Activated naive CD4-positive, alpha-beta T cell treated with anti-CD3 and anti-CD28 coated beads for 36 hours (primary cell): ENCODE measurements at regions of chr19 and their contacts with region 1.

Region 1: GRCh38 chr19:34963573-34964409 is at the start of gene ZNF792:
- DNase-seq: peak; percentile 67
- H3K4me3 Mint-ChIP-seq: peak within 1 kb of the TSS; percentile 89
- H3K27ac Mint-ChIP-seq: peak within 1 kb of the TSS; percentile 60
- H3K4me1 Mint-ChIP-seq: peaks cover 21% of the 10 kb centered on the region
- H3K27me3 Mint-ChIP-seq: no peaks in the 10 kb centered on the region
- total RNA-seq, gene ZNF792: 3.1 to 3.5 TPM

Region 2: DNA sequence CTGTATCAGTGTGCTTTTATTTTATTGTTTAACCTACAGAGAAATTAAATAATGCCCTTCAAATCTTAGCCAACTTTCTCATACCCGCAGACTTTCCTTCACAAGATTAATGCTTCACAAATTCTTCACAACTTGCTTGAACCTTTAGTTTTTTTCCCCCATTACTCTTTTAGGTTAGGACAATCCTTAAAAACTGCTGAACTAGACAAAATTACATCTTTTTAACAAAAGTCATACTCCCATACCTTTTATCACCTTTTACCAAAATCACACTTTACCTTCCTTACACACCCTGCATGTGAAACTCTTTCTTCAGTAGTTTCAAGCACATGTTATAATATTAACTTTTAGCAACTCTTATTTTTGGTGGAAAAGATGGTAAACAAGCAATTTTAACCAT is 345.4 kb before region 1 on chr19:
- CTCF ChIA-PET with region 1: no interaction called
- intact Hi-C with region 1: no loop called
- DNase-seq: no peak
- H3K4me3 Mint-ChIP-seq: no peak overlapping the region
- H3K27ac Mint-ChIP-seq: no peak overlapping the region
- H3K4me1 Mint-ChIP-seq: no peaks in the 10 kb centered on the region
- H3K27me3 Mint-ChIP-seq: no peaks in the 10 kb centered on the region

Region 3: DNA sequence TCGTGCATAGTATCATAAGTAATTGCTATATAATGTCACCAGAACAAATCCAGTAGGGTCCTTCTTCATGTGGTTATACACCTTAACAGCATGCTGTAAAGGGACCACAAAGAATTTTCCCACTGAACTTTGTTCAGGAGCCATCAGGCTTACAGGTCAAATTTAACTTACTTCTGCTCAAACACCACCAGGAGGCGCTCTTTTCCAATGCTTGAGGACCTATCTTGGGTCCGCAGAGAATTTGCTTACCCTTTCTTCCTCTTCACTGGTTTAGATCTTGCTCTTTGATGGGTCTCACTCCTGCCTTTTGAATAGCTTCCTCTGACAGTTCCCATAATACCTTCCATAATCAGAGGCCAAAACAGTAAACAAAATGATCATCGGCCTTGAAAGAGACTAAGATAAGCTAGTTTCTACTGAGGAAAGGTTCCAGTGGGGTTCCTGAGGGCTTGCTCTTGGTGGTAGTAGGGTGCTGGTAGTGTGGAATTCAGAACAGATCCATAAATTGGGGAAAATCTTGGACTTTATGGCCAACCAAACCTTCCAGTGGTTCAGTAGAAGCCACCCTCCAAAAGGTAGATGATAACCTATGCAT is 324.2 kb before region 1 on chr19:
- CTCF ChIA-PET with region 1: no interaction called
- intact Hi-C with region 1: no loop called
- DNase-seq: peak; percentile 78
- H3K4me3 Mint-ChIP-seq: no peak overlapping the region
- H3K27ac Mint-ChIP-seq: no peak overlapping the region
- H3K4me1 Mint-ChIP-seq: no peaks in the 10 kb centered on the region
- H3K27me3 Mint-ChIP-seq: no peaks in the 10 kb centered on the region

Region 4: GRCh38 chr19:34926685-34927375 is 37.0 kb before region 1 on chr19 and contains the start of gene ZNF30:
- CTCF ChIA-PET with region 1: no interaction called
- intact Hi-C with region 1: loop called (anchors 1 kb)
- DNase-seq: peak; percentile 93
- H3K4me3 Mint-ChIP-seq: peak within 1 kb of the TSS; percentile 89
- H3K27ac Mint-ChIP-seq: peak within 1 kb of the TSS; percentile 44
- H3K4me1 Mint-ChIP-seq: peaks cover 13% of the 10 kb centered on the region
- H3K27me3 Mint-ChIP-seq: no peaks in the 10 kb centered on the region
- total RNA-seq, gene ZNF30: 4.4 to 5.5 TPM

Region 5: GRCh38 chr19:35030257-35031071 is 66.7 kb after region 1 on chr19 and contains the start of gene SCN1B:
- CTCF ChIA-PET with region 1: no interaction called
- intact Hi-C with region 1: no loop called
- DNase-seq: peak; percentile 78
- H3K4me3 Mint-ChIP-seq: peak within 1 kb of the TSS; percentile 65
- H3K27ac Mint-ChIP-seq: no peak within 1 kb of the TSS
- H3K4me1 Mint-ChIP-seq: peaks cover 12% of the 10 kb centered on the region
- H3K27me3 Mint-ChIP-seq: peaks cover 19% of the 10 kb centered on the region
- total RNA-seq, gene SCN1B: 0.83 to 0.89 TPM

Region 6: DNA sequence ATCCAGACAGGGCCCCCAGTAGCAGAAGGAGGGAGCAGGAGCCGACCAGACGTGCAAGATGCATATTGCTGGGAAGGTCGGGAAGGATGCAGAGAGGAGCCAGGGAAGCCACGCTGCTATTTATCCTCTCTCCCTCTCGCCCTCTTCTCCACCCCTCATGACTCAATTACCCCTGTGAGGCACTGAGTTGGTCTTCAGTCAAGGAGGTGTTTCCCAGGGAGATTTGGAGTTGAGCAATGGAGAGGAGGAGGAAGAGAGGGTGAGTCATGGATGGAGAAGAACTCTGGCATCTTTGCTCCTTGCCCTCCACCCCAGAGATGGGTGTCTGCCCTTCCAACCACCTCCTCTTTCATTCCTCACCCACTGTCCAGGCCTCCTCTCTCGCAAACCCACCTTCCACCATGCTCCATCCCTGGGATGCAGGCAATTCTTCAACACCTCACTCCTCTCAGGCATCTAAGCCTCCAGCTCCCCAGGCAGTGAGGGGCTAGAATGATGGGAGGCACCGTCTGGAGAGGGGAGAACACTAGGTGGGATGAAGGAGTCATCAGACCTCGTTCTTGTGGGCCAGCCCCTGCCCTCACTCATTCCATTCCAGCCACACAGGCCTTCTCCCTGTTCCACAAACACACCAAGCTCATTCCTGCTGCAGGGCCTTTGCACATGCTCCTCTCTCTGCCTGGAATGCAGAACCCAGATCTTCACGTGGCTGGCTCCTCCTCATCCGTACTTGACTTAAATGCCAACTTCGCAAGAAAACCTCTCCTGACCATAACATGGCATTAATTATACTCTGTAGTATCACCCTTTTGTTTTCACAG is 564.6 kb after region 1 on chr19 and contains the start of gene SBSN:
- CTCF ChIA-PET with region 1: no interaction called
- intact Hi-C with region 1: no loop called
- DNase-seq: no peak
- H3K4me3 Mint-ChIP-seq: no peak within 1 kb of the TSS
- H3K27ac Mint-ChIP-seq: no peak within 1 kb of the TSS
- H3K4me1 Mint-ChIP-seq: peaks cover 2% of the 10 kb centered on the region
- H3K27me3 Mint-ChIP-seq: peaks cover 14% of the 10 kb centered on the region
- total RNA-seq, gene SBSN: not detected